ENCODE measurements at regions of chr10 and their contacts with region 1.

Region 1: GRCh38 chr10:124388823-124389612 is 29.7 kb downstream of the OAT start:
- DNase-seq: peak; percentile 83
- H3K4me3 ChIP-seq: peak overlapping the region; percentile 24 to 36 (median 29)
- H3K27ac ChIP-seq: no peak overlapping the region
- H3K4me1 ChIP-seq: no peaks in the 10 kb centered on the region
- H3K27me3 ChIP-seq: no peaks in the 10 kb centered on the region
- CTCF ChIP-seq: peak; percentile 89 to 95
- POLR2A ChIP-seq: no peak

Region 2: GRCh38 chr10:123582084-123582989 is 806.7 kb before region 1 on chr10:
- CTCF ChIA-PET with region 1: interaction called, 16 read pairs
- POLR2A ChIA-PET with region 1: no interaction called
- dilution Hi-C with region 1: no loop called
- intact Hi-C with region 1: loop called (anchors 1 kb)
- DNase-seq: peak; percentile 69
- H3K4me3 ChIP-seq: no peak overlapping the region
- H3K27ac ChIP-seq: no peak overlapping the region
- H3K4me1 ChIP-seq: no peaks in the 10 kb centered on the region
- H3K27me3 ChIP-seq: peaks cover 0 to 1% of the 10 kb centered on the region in 2 experiments
- CTCF ChIP-seq: peak; percentile 83 to 89
- POLR2A ChIP-seq: no peak

Region 3: DNA sequence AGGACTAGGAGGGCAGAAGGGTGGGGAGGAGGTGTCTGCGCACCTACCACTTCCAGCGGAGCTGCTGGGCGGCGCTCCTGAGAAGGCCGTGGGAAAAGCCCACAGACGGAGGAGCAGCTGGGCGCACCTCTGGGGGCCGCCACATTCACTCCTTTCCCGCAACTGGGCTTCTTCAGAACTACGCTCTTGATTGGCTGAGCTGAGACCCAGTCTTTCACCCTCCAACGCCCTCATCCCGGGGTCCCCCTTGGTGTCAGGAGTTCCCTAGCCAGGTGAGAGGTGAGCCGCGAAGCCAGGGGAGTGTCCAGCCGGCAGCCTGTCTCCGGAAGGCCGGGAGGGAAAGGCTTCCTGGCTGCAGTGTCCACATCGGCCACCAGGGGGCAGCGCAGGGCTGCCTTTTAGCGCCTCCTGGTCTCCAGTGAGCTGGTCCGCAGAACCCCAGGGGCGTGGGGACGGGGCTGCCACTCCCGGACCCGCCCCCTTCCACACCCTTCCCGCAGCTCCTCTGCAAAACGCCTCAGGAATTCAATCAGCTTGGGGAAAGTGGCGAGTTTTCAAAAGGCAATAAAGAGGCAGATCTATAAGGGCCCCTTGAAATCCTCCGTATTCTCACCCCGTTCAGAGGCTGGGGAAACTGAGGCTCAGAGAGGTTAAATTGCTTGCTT is 394.5 kb before region 1 on chr10:
- CTCF ChIA-PET with region 1: interaction called, 691 read pairs
- POLR2A ChIA-PET with region 1: interaction called, 3 read pairs
- dilution Hi-C with region 1: no loop called
- intact Hi-C with region 1: loop called (anchors 1 kb)
- DNase-seq: peak; percentile 76
- H3K4me3 ChIP-seq: no peak overlapping the region
- H3K27ac ChIP-seq: no peak overlapping the region
- H3K4me1 ChIP-seq: no peaks in the 10 kb centered on the region
- H3K27me3 ChIP-seq: peaks cover 19 to 24% of the 10 kb centered on the region in 2 experiments
- CTCF ChIP-seq: peak; percentile 92 to 96
- POLR2A ChIP-seq: no peak

Region 4: DNA sequence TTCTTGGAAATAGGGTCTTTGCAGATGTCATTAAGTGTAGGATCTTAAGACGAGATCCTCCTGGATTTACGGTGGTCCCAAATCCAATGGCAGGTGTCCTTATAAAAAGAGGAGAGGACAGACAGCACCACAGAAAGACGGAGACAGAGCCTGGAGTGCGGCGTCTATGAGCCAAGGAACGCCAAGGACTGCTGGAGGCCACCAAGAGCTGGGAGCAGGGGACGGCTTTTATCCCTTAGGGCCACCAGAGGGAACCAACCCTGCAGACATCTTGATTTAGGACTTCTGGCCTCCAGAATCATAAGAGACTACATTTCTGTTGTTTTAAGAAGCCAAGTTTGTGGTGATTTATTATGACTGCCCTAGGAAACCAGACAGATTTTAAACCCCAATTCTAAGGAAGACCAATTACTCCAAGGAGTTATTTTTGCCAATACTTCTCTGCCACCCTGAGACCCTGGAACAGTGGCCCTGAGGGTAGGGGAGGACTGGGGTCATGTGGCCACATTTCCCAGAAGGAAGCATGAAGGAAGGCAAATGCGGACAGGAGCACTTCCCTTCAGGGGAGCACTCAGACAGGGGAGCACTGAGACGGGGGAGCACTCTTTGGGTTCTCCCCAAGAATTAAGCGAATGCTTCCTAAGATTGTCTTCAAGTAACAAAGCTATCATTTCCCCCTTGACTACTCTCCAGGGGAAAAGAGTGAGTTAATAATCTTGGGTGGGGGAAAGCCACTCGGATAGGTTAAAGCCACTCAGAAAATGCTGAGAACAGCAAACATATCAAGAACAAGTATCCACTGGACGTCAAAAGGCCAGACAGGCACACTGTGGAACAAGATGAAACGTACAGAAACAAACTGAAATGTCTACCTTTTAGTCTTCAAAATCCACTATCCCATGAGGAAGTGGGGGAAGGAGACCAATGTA is 363.1 kb before region 1 on chr10:
- CTCF ChIA-PET with region 1: interaction called, 49 read pairs
- POLR2A ChIA-PET with region 1: no interaction called
- dilution Hi-C with region 1: no loop called
- intact Hi-C with region 1: loop called (anchors 1 kb)
- DNase-seq: peak; percentile 31
- H3K4me3 ChIP-seq: no peak overlapping the region
- H3K27ac ChIP-seq: no peak overlapping the region
- H3K4me1 ChIP-seq: no peaks in the 10 kb centered on the region
- H3K27me3 ChIP-seq: no peaks in the 10 kb centered on the region
- CTCF ChIP-seq: peak; percentile 13 to 20
- POLR2A ChIP-seq: no peak

Region 5: DNA sequence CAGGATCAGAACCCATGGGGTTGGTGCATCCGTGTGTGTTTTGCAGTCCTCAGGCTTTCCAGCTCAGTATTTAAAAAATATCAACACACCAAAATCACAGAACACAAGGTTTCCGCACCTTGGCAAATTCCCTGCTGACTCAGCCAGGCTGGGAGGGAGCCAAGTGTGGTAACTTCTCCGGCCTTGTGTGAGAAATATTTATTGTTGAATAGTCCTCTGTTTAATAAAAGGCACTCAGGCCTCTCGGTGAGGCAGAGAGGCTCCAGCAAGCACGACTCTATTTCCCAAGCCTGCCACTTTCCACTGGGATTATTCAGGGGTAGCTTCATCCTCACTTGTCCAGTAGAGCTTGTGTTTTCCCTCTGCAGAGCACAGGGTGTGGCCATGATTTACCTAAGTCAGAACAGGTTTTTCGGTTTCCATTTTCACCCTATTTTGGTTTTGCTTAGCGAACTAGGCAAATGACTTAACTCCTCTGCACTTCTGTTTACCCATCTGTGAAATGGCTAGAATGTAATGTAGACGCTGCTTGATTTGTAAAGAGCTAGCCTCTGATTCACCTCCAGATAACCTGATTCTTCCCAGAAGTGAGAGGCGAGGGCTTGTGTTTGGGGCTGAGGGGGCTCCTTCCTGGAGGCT is 282.7 kb before region 1 on chr10:
- CTCF ChIA-PET with region 1: interaction called, 10 read pairs
- POLR2A ChIA-PET with region 1: no interaction called
- dilution Hi-C with region 1: no loop called
- intact Hi-C with region 1: no loop called
- DNase-seq: peak; percentile 97
- H3K4me3 ChIP-seq: no peak overlapping the region
- H3K27ac ChIP-seq: peak overlapping the region; percentile 38
- H3K4me1 ChIP-seq: peaks cover 15% of the 10 kb centered on the region
- H3K27me3 ChIP-seq: no peaks in the 10 kb centered on the region
- CTCF ChIP-seq: no peak
- POLR2A ChIP-seq: no peak

Region 6: DNA sequence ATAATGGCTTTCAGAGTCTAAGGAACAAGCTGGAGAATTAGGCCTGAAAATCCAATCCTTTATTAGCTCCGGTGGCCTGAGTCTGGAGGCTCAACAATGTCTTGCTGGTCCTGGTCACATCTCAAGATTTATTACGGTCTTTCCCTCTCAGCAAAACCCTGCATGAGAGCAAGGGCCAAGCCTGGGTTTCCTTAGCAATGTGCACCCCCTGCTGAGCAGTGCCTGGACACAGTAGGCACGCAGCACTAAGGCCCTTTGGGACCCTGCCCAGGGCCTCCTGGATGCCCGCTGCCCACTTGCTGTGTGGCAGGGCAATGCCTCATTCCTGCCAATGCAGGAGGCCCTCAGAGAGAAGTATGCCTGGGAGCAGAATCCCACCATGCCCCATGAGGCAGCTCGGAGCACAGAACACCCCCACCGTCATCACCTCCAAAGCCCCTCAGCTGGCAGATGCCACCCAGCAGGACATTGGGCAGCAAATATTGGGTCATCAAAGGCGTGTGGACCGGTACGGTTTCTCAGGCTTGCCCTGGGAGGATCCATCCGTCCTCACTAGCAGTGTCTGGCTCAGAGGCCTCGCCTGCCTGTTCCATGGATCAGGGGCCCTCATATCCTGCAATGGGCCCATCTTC is 126.7 kb before region 1 on chr10:
- CTCF ChIA-PET with region 1: interaction called, 4 read pairs
- POLR2A ChIA-PET with region 1: no interaction called
- dilution Hi-C with region 1: no loop called
- intact Hi-C with region 1: loop called (anchors 5 kb)
- DNase-seq: peak; percentile 11
- H3K4me3 ChIP-seq: no peak overlapping the region
- H3K27ac ChIP-seq: no peak overlapping the region
- H3K4me1 ChIP-seq: no peaks in the 10 kb centered on the region
- H3K27me3 ChIP-seq: no peaks in the 10 kb centered on the region
- CTCF ChIP-seq: peak in 1 of 2 donors; percentile 4
- POLR2A ChIP-seq: no peak

Region 7: GRCh38 chr10:124378881-124379471 is 10.0 kb before region 1 on chr10:
- CTCF ChIA-PET with region 1: interaction called, 22 read pairs
- POLR2A ChIA-PET with region 1: no interaction called
- dilution Hi-C with region 1: no loop called
- intact Hi-C with region 1: no loop called
- DNase-seq: no peak
- H3K4me3 ChIP-seq: no peak overlapping the region
- H3K27ac ChIP-seq: no peak overlapping the region
- H3K4me1 ChIP-seq: no peaks in the 10 kb centered on the region
- H3K27me3 ChIP-seq: peaks cover 0 to 3% of the 10 kb centered on the region in 2 experiments
- CTCF ChIP-seq: no peak
- POLR2A ChIP-seq: no peak

Region 8: DNA sequence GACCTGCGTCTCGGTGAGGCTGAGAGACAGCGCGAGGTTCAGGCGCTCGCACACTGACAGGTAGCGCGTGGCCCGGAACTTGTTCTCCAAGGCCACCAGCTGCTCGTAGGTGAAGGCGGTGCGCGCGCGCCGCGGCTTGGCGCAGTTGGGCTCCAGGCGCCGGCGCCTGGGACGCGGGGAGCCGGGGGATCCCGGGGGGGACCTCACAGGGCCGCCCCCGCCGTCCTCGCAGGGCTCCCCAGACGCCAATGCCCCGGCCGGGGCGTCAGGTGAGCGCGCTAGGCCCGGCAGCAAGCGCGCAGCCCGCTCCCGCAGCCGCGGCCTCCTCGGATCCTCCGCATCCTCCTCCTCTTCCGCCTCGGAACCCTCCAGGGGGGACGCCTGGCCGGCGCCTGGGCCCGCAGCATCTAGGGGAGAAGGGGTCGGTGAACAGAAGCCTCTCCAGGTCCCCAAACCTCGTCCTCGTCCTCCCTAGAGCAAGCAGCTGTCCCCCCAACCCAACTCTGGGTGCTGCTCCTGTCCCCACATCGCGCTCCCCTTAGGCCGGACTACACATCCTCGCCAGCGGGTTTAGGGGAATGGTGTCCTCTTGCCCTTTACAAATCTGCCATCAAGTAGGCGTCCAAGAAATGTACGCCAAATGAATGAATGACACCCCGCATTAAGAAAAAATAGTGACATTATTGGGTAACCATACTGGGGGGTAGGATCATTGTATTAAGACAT is 58.9 kb after region 1 on chr10:
- CTCF ChIA-PET with region 1: no interaction called
- POLR2A ChIA-PET with region 1: no interaction called
- dilution Hi-C with region 1: no loop called
- intact Hi-C with region 1: no loop called
- DNase-seq: no peak
- H3K4me3 ChIP-seq: no peak overlapping the region
- H3K27ac ChIP-seq: no peak overlapping the region
- H3K4me1 ChIP-seq: peaks cover 2% of the 10 kb centered on the region
- H3K27me3 ChIP-seq: peaks cover 70 to 85% of the 10 kb centered on the region in 2 experiments
- CTCF ChIP-seq: no peak
- POLR2A ChIP-seq: no peak

Region 9: DNA sequence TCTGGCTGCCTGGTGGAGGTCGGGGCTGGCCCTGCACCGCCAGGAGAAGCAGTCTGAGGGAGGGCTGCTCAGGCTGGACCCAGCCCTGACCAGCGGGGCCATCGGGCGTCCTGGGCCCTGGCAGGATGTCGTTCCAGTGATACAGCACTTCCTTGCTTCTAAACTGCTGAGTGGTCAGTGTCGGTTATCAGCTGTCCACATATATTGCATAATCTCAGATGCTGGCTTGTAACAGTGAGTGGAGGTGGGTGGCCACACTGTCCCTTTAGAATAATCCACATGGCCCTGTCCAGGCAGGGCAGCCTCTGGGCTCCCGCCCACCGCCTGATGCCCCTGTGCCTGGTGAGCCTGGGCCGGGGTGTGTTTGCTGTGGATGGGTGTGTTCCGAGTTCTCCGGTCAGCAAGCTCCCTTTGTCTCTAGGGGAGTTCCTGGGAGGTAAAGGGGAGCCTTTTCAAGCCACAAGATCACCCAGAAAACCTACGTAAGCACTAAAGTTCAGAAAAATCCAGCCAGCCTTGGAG is 158.7 kb after region 1 on chr10:
- CTCF ChIA-PET with region 1: no interaction called
- POLR2A ChIA-PET with region 1: no interaction called
- dilution Hi-C with region 1: no loop called
- intact Hi-C with region 1: no loop called
- DNase-seq: no peak
- H3K4me3 ChIP-seq: no peak overlapping the region
- H3K27ac ChIP-seq: no peak overlapping the region
- H3K4me1 ChIP-seq: no peaks in the 10 kb centered on the region
- H3K27me3 ChIP-seq: no peaks in the 10 kb centered on the region
- CTCF ChIP-seq: no peak
- POLR2A ChIP-seq: no peak

Measured in endothelial cell of umbilical vein (primary cell).